Activated T-helper 1 cell treated with anti-CD3 and anti-CD28 coated beads, Interleukin-12 subunit alpha, Interleukin-12 subunit beta, Interleukin-2, Interleukin-4 antibody, amounts not matched to agents 30 ng/mL and 10 ng/mL and 1 ng/mL, durations not matched to agents 14 hours and 24 hours and 36 hours (primary cell): ENCODE measurements at regions of chr2 and their contacts with region 1.

Region 1: GRCh38 chr2:157838442-157839161 is 37.5 kb downstream of the ACVR1 start:
- DNase-seq: peak; percentile 11
- H3K4me3 Mint-ChIP-seq: peak overlapping the region; percentile 27
- H3K27ac Mint-ChIP-seq: peak overlapping the region; percentile 78
- H3K4me1 Mint-ChIP-seq: peaks cover 60% of the 10 kb centered on the region
- H3K27me3 Mint-ChIP-seq: no peaks in the 10 kb centered on the region

Region 2: GRCh38 chr2:157784169-157784822 is 54.3 kb before region 1 on chr2:
- intact Hi-C with region 1: loop called (anchors 2 kb)
- DNase-seq: no peak
- H3K4me3 Mint-ChIP-seq: peak overlapping the region; percentile 37
- H3K27ac Mint-ChIP-seq: peak overlapping the region; percentile 32
- H3K4me1 Mint-ChIP-seq: peaks cover 87% of the 10 kb centered on the region
- H3K27me3 Mint-ChIP-seq: no peaks in the 10 kb centered on the region

Region 3: DNA sequence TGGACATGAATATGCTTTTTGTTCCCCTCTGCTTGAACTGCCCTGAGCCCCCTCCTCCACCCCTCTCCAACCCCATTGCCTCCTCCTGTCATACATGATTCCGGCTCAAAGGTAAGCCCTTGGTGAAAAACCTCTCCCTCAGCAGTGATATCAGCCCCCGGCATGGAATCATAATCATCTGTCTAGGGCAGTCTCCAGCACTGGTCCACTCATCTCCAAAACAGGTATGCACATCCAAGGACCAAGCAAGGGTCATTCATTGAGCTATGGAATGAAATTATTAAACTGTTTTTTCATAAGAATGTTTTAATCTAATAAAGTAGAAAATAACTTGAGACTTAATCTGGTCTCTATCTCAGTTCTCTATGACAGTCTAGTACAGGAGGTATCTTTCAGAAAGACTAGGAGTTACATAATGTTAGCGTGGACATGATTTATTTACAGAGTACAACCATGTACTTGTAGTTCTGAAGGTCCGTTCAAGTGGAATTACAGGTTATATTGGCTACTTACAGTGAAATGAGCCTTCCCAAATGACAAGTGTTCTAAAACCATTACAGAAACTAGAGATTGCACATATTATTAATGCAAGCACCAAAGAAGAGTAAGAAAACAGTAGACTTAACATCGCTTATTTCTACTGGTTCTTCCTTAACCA is 37.6 kb before region 1 on chr2:
- intact Hi-C with region 1: loop called (anchors 5 kb)
- DNase-seq: no peak
- H3K4me3 Mint-ChIP-seq: no peak overlapping the region
- H3K27ac Mint-ChIP-seq: no peak overlapping the region
- H3K4me1 Mint-ChIP-seq: peaks cover 5% of the 10 kb centered on the region
- H3K27me3 Mint-ChIP-seq: no peaks in the 10 kb centered on the region

Region 4: DNA sequence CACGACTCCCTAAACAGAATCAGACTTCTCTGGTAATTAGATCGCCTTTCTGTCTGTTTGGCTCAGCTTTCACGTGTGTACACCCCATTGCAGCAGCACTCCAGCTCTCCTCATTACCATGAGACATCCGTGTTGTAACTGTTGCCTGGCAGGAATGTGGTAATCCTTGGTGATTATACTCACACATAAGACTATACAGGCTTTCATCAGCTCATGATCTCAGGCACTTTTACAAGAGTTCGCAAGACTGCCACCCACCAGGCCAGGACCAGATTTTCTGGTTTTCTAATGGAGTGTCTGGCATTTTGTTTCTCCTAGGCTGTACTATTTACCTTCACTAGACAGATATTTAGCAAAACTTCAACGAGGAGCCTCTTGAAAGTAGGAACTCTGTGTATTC is 12.7 kb before region 1 on chr2:
- intact Hi-C with region 1: loop called (anchors 2 kb)
- DNase-seq: no peak
- H3K4me3 Mint-ChIP-seq: no peak overlapping the region
- H3K27ac Mint-ChIP-seq: no peak overlapping the region
- H3K4me1 Mint-ChIP-seq: peaks cover 38% of the 10 kb centered on the region
- H3K27me3 Mint-ChIP-seq: no peaks in the 10 kb centered on the region

Region 5: GRCh38 chr2:157857881-157858280 is 19.3 kb after region 1 on chr2:
- intact Hi-C with region 1: loop called (anchors 2 kb)
- DNase-seq: no peak
- H3K4me3 Mint-ChIP-seq: no peak overlapping the region
- H3K27ac Mint-ChIP-seq: no peak overlapping the region
- H3K4me1 Mint-ChIP-seq: peaks cover 38% of the 10 kb centered on the region
- H3K27me3 Mint-ChIP-seq: no peaks in the 10 kb centered on the region

Region 6: GRCh38 chr2:157876066-157876787 is 37.6 kb after region 1 on chr2 and contains the start of gene ACVR1:
- intact Hi-C with region 1: loop called (anchors 1 kb)
- DNase-seq: peak; percentile 80
- H3K4me3 Mint-ChIP-seq: peak within 1 kb of the TSS; percentile 98
- H3K27ac Mint-ChIP-seq: peak within 1 kb of the TSS; percentile 96
- H3K4me1 Mint-ChIP-seq: peaks cover 65% of the 10 kb centered on the region
- H3K27me3 Mint-ChIP-seq: no peaks in the 10 kb centered on the region
- total RNA-seq, gene ACVR1: 44.0 and 46.5 TPM in 2 replicates

Region 7: DNA sequence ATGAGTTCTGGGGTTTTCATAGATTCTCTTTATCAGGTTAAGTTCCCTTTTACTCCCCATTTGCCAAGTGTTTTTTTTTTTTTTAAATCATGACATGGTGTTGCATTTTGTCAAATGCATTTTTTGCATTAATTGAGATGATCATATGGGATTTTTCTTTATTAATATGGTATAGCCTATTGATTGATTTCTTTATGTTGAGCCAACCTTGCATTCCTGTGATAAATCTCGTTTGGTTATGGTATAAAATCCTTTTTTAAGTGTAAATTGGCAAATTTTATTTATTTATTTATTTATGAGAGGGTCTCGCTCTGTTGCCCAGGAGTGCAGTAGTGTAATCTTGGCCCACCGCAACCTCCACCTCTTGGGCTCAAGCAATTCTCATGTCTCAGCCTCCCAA is 119.0 kb after region 1 on chr2:
- intact Hi-C with region 1: no loop called
- DNase-seq: no peak
- H3K4me3 Mint-ChIP-seq: no peak overlapping the region
- H3K27ac Mint-ChIP-seq: no peak overlapping the region
- H3K4me1 Mint-ChIP-seq: no peaks in the 10 kb centered on the region
- H3K27me3 Mint-ChIP-seq: peaks cover under 1% of the 10 kb centered on the region